ENCODE measurements at regions of chr11 and their contacts with region 1.

Region 1: DNA sequence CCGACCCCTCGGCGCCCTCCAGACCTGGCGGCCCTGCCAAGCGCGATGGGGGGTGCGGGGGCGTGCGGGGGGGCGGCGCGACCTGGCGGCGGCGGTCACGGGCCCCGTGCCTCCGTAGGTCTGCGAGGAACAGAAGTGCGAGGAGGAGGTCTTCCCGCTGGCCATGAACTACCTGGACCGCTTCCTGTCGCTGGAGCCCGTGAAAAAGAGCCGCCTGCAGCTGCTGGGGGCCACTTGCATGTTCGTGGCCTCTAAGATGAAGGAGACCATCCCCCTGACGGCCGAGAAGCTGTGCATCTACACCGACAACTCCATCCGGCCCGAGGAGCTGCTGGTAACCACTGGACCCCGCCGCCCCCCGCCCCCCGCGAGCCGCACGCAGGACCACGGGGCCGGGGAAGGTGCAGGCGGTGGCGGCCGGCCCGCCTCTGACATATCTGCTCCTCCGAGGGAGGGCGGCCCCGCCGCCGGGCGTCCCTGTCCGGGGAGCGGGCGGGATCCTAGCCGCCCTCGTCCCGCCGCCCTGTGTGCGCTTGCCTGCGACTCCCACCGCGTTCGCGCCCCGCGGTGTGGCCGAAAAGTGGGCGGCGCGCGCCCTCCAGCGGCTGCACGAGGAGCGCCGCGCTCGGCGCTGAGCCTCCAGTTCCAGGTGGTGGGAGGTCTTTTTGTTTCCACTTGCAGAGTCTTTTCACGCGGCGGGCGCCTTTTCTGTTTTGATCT is 2.1 kb downstream of the CCND1 start:
- DNase-seq: peak; percentile 76
- H3K4me3 ChIP-seq: peak overlapping the region; percentile 87 to 99
- H3K27ac ChIP-seq: peak overlapping the region; percentile 91 to 93
- H3K4me1 ChIP-seq: peaks cover 38% of the 10 kb centered on the region
- H3K27me3 ChIP-seq: no peaks in the 10 kb centered on the region
- CTCF ChIP-seq: peak; percentile 96 to 98 (median 97)
- POLR2A ChIP-seq: peak; percentile 42

Region 2: DNA sequence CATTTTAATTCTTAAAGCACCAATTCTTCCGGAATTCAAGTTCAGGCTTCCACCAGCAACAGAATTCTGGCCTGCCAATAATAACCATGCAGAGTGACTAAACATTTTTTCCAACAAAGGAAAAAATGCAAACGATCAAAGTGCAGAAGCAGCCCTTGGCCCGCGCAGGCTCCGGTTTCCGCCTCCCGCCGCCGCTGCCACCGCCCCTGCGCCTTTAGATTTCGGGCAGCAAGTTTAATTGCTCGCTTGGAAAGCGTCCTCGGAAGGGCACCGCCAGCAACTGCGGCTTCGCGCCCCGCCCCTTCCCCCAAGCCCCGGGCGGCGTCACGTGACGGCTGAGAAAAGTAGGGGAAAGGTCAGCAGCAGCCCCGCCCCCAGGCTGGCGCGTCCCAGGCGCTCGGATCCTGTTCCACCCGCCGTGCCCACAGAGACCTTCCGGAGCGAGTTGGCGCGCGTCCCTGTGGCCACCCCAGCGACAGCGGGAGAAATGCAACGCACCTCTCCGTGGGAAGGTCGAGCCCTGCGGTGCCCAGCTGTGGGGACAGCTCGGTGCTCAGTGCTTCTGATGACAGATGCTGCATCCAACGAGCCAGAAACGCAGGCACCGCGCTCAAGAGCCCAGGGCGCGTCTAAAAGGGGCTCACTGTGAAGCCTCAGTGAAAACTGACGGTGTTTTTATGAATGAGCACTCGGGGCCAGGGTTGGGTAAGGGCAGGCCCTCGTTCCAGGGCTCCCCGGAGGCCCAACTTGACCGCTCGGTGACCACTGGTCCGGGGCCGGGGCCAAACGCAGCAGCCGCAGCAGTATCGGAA is 803.8 kb before region 1 on chr11:
- intact Hi-C with region 1: loop called (anchors 10 kb)
- DNase-seq: peak; percentile 96
- H3K4me3 ChIP-seq: peak overlapping the region; percentile 51 to 74
- H3K27ac ChIP-seq: peak overlapping the region; percentile 86 to 89
- H3K4me1 ChIP-seq: peaks cover 11% of the 10 kb centered on the region
- H3K27me3 ChIP-seq: no peaks in the 10 kb centered on the region
- CTCF ChIP-seq: peak in 1 of 4 experiments; percentile 7
- POLR2A ChIP-seq: peak; percentile 37

Region 3: DNA sequence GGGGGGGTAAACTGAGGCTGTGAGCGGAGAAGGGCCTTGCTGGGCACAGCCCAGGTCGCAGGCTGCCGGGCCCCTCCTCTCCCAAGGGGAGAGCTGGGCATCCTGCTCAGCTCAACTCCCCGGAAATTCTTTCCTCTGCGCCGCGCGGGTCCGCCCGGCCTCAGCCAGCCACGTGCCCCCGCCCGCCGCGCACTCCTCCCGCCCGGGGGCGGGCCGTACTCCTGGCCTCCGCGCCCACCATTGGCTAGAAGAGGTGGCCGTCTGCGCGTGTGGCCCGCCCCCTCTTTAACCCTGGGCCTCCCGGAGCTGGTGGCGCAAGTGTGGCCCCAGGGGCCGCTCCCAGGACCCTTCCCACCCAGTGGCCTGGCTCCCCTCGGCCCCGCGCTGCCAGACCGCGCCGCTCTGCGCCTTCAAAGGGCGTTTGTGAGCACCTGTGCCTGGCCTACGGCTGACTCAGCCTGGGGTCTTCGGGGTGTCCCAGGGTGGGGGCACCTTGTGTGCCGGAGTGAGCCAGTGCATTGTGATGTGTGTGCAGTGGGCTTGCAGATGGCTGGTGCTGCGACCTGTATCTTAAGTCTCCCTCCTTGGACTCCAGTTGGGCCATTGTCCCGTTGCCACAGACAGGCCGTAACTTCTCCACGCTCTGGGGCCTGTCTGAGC is 632.0 kb before region 1 on chr11:
- intact Hi-C with region 1: loop called (anchors 5 kb)
- DNase-seq: peak; percentile 64
- H3K4me3 ChIP-seq: peak overlapping the region; percentile 36 to 37
- H3K27ac ChIP-seq: peak overlapping the region; percentile 84 to 87
- H3K4me1 ChIP-seq: no peaks in the 10 kb centered on the region
- H3K27me3 ChIP-seq: no peaks in the 10 kb centered on the region
- CTCF ChIP-seq: no peak
- POLR2A ChIP-seq: peak; percentile 45

Region 4: DNA sequence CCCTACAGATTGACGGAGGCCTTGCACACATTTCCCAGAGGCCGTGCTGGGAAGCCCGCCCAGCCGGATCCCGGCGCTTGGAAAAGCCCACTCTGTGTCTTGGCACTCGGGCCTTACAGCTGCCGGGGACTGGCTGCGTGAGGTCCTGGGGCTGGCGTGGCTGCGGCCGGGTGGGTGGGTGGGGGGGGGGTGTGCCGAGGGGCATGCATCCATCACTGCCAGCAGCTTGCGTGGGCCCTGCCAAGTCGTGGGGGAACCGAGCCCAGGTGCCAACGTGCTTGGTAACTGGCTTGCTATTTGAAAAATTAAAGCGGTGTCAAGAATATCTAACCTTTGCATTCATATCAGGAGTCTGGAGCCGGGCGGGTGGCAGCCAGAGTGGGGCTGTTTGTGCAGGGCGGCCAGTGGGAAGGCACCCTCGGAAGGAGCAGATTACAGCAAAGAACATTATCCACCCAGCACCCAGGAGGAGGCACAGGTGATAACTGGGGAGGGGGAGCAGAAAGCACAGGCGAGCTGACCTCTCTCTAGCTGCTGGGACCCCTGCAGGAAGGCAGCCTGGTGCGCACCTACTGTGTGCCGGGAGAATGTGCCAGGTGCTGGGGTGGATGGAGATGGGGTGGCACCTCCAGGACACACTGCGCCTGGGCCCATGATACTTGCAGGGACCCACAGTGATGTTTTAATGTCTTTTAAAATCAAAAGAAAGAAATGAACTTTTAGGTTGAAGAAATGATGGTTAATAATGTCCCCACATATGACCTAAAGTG is 515.8 kb before region 1 on chr11:
- intact Hi-C with region 1: loop called (anchors 5 kb)
- DNase-seq: no peak
- H3K4me3 ChIP-seq: no peak overlapping the region
- H3K27ac ChIP-seq: no peak overlapping the region
- H3K4me1 ChIP-seq: peaks cover 12% of the 10 kb centered on the region
- H3K27me3 ChIP-seq: no peaks in the 10 kb centered on the region
- CTCF ChIP-seq: no peak
- POLR2A ChIP-seq: no peak

Region 5: GRCh38 chr11:69443138-69443967 is 199.7 kb before region 1 on chr11:
- intact Hi-C with region 1: loop called (anchors 10 kb)
- DNase-seq: peak; percentile 76
- H3K4me3 ChIP-seq: peak overlapping the region in 1 of 2 donors; percentile 16
- H3K27ac ChIP-seq: peak overlapping the region; percentile 50 to 58
- H3K4me1 ChIP-seq: peaks cover 19% of the 10 kb centered on the region
- H3K27me3 ChIP-seq: no peaks in the 10 kb centered on the region
- CTCF ChIP-seq: peak in 1 of 4 experiments; percentile 6
- POLR2A ChIP-seq: peak; percentile 11

Region 6: GRCh38 chr11:69670158-69670845 is 27.2 kb after region 1 on chr11:
- intact Hi-C with region 1: loop called (anchors 2 kb)
- DNase-seq: peak; percentile 86
- H3K4me3 ChIP-seq: no peak overlapping the region
- H3K27ac ChIP-seq: peak overlapping the region in 1 of 2 donors; percentile 38
- H3K4me1 ChIP-seq: peaks cover 6% of the 10 kb centered on the region
- H3K27me3 ChIP-seq: no peaks in the 10 kb centered on the region
- CTCF ChIP-seq: peak; percentile 76 to 96 (median 90)
- POLR2A ChIP-seq: no peak

Measured in prostate gland (tissue), 2 donors.